Sigmoid colon (tissue), 7 donors: ENCODE measurements at regions of chr19 and their contacts with region 1.

Region 1: DNA sequence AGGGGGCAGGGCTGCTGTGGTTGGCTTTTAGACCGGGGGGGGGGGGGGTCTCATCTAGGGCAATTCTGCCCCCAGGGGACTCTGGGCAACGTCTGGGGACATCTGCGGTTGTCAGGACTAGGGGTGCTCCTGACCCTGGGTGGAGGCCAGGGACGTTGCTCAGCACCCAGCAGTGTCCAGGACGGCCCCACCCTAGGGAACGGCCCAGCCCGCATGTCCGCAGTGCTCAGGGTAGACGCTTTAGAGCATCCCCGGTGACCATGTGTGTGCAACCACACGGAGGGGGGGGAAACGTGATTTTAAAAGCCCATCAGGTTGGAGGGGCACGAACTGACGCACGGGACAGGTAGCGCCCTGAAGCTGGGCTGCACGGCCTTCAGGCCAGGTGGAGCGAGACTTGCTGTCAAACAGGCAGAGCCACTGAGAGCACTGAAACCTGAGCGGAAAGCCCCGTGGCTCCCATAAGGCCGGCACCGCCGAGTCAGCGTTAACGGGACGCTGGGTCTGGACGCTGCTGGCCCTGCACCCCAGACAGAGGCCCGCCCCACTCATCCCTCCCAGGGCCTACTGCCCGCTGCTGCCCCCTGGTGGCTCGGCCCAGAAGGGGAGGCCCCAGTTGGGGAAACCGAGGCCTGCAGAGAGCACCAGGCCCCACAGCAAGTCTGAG is 8.3 kb downstream of the CACTIN start:
- DNase-seq: peak; percentile 88
- H3K4me3 ChIP-seq: peak overlapping the region in 1 of 4 donors; percentile 12
- H3K27ac ChIP-seq: peak overlapping the region in 2 of 4 donors; percentile 10 to 47
- H3K4me1 ChIP-seq: peaks cover 0 to 28% (median 24%) of the 10 kb centered on the region in 4 donors
- H3K27me3 ChIP-seq: no peaks in the 10 kb centered on the region
- CTCF ChIP-seq: peak; percentile 95 to 97 (median 95)
- EP300 ChIP-seq: no peak
- POLR2A ChIP-seq: no peak

Region 2: GRCh38 chr19:3324321-3324856 is 293.9 kb before region 1 on chr19:
- intact Hi-C with region 1: loop called (anchors 10 kb)
- DNase-seq: peak; percentile 80
- H3K4me3 ChIP-seq: no peak overlapping the region
- H3K27ac ChIP-seq: no peak overlapping the region
- H3K4me1 ChIP-seq: peaks cover 0 to 9% (median 4%) of the 10 kb centered on the region in 4 donors
- H3K27me3 ChIP-seq: peaks cover 0 to 22% (median 19%) of the 10 kb centered on the region in 3 donors
- CTCF ChIP-seq: peak; percentile 54 to 66 (median 58)
- EP300 ChIP-seq: no peak
- POLR2A ChIP-seq: no peak

Region 3: GRCh38 chr19:3365836-3366752 is 252.2 kb before region 1 on chr19 and contains the start of gene NFIC:
- intact Hi-C with region 1: no loop called
- DNase-seq: peak; percentile 94
- H3K4me3 ChIP-seq: peak within 1 kb of the TSS; percentile 97 to 100 (median 99)
- H3K27ac ChIP-seq: peak within 1 kb of the TSS; percentile 98 to 100 (median 100)
- H3K4me1 ChIP-seq: peaks cover 0 to 71% (median 63%) of the 10 kb centered on the region in 4 donors
- H3K27me3 ChIP-seq: no peaks in the 10 kb centered on the region
- CTCF ChIP-seq: no peak
- EP300 ChIP-seq: peak in 3 of 4 donors; percentile 24 to 75 (median 42)
- POLR2A ChIP-seq: peak in 1 of 2 donors; percentile 12
- total RNA-seq, gene NFIC: 63.2 to 114 (median 74.2) TPM

Region 4: DNA sequence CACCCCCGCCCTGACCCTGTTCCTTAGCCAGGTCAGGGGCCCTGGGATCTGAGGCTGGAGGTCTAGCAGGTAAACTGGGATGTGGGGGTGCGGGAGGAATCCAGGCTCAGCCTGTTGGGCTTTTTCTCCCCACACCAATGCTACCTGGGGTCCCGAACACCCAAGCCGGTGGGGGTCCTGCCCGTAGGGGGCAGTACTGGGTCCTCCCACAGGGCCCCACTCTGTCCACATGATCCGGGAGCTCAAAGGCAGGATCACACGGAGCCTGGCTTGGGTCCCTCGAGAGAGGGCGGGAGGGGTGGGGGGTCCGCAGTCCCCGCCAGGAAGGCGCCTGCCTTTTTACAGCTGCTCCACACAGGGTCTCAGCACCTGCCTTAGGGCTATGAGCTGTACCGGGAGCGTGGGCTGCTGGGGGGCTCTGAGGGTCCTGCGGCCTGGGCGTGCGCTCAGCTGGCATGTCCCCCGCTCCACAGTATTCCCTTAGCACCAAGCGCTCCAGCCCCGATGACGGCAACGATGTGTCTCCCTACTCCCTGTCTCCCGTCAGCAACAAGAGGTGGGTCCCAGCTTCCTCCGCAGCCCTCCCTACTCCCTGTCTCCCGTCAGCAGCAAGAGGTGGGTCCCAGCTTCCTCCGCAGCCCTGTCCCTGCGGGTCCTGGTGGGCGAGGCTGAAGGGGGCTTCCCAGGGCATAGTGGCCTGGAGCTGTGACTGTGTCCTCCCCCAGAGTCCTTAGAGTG is 91.6 kb before region 1 on chr19:
- intact Hi-C with region 1: no loop called
- DNase-seq: no peak
- H3K4me3 ChIP-seq: no peak overlapping the region
- H3K27ac ChIP-seq: no peak overlapping the region
- H3K4me1 ChIP-seq: no peaks in the 10 kb centered on the region
- H3K27me3 ChIP-seq: no peaks in the 10 kb centered on the region
- CTCF ChIP-seq: no peak
- EP300 ChIP-seq: no peak
- POLR2A ChIP-seq: no peak

Region 5: GRCh38 chr19:3544742-3545668 is 73.3 kb before region 1 on chr19:
- intact Hi-C with region 1: loop called (anchors 1 kb)
- DNase-seq: peak; percentile 82
- H3K4me3 ChIP-seq: no peak overlapping the region
- H3K27ac ChIP-seq: peak overlapping the region in 1 of 4 donors; percentile 17
- H3K4me1 ChIP-seq: no peaks in the 10 kb centered on the region
- H3K27me3 ChIP-seq: no peaks in the 10 kb centered on the region
- CTCF ChIP-seq: peak; percentile 91 to 96 (median 92)
- EP300 ChIP-seq: no peak
- POLR2A ChIP-seq: no peak

Region 6: DNA sequence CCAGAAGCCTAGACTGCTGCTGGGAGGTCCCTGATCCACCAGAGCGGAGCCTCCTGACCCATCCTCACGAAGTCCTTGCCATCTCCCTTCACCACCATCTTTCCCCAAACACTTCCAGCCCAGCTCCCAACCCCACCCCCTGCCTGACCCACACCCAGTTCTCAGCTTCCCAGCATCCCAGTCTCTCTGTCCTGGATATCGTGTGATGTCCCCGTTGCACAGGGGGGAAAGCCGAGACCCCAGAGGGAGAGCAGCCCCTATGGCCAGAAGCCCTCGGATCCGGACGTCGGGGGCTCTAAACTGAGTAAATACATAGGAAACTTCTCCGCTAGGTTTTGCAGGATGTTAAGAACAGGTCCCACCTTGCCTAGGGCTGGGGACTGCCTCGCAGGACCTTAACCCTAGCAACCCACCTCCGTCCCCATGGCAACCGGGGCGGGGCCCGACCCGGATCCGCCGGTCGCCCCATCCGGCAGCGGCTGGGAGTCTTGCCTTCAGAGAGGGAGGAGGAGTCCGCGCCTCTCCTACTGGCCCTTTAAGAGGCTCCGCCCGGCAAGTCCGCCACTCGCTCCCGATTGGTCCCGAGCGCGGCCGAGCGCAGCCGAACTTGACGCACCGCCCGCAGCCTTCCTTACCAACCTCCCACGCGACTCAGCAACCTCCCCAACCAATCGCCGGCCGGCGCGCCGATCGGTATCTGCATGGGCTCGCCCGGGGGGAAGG is 46.0 kb before region 1 on chr19:
- intact Hi-C with region 1: loop called (anchors 5 kb)
- DNase-seq: peak; percentile 100
- H3K4me3 ChIP-seq: peak overlapping the region; percentile 37 to 98 (median 82)
- H3K27ac ChIP-seq: peak overlapping the region; percentile 59 to 91 (median 90)
- H3K4me1 ChIP-seq: peaks cover 0 to 44% (median 37%) of the 10 kb centered on the region in 4 donors
- H3K27me3 ChIP-seq: no peaks in the 10 kb centered on the region
- CTCF ChIP-seq: no peak
- EP300 ChIP-seq: no peak
- POLR2A ChIP-seq: no peak